Sciatic nerve (tissue), 2 donors: ENCODE measurements at regions of chr1 and their contacts with region 1.

Region 1: DNA sequence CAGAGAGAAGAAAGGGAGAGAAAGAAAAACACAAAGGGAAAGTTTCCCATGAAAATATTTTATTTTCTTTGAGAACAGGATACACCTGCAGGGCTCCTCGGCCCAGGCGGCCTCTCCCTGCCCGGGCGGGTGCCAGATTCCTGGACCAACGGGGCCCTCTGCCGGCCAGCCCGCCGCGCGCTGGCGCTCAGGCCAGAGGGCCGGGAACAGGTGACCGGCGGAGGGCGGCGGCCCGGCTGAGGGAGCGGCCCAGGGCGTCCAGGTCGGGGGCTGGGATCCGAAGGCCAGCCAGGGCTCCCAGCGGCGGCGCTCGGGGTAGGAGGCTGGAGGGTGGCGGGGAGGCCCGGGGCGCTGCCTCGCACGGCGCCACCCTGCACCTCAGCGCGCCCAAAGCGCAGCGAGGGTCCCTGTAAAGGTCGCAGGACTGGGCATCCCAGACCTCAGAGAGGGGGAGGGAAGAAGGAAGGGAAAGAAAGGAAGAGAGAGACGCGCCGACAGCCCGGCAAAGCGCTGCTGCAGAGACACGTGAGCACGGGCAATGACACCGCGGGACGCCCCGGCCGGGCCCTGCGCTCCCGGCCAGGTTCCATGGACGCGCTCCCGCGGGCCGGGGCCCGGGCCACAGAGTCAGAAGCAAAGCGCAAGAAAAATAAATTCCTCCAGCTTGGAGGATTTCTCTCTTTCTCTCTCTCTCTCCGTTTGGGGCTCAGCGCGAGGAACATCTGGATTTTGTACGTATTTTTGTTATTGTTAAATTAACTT is 927 bp downstream of the WNT9A start:
- DNase-seq: peak; percentile 87
- ATAC-seq: peak; percentile 79

Region 2: GRCh38 chr1:227766015-227766630 is 180.7 kb before region 1 on chr1:
- intact Hi-C with region 1: loop called (anchors 5 kb)
- DNase-seq: no peak
- ATAC-seq: no peak

Region 3: DNA sequence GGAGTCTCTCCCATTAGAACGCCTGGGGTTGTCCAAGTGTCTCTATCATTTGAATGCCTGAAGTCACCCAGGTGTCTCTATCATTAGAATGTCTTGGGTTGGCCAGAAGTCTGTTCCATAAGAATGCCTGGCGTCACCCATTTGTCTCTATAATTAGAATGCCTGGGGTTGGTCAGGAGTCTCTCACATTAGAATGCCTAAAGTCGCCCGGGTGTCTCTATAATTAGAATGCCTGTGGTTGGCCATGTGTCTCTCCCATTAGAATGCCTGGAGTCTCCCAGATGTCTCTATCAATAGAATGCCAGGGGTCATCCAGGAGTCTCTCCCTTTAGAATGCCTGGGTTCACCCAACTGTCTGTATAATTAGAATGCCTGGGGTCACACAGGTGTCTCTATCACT is 594.9 kb after region 1 on chr1:
- intact Hi-C with region 1: no loop called
- DNase-seq: peak; percentile 0
- ATAC-seq: no peak